ENCODE measurements at regions of chr3 and their contacts with region 1.

Region 1: DNA sequence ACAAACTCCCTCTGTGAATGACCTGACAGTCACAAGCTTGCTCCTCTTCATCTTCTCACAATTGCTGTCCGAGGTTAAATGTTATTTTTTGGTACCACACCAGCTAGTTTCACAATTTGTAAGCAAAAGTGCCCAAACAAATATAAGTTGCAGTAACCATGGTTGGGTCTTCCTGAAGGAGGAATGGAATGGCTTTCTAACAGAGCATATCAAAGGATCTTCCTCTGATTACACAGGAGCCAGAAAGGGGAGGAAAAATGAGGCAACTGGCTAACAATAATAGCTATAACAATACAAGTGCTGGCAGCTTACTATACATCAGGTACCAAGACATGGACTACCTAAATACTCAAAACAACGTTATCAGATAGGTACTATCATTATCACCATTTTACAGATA is 90.4 kb downstream of the WWTR1 start:
- DNase-seq: no peak
- ATAC-seq: no peak
- H3K4me3 ChIP-seq: no peak overlapping the region
- H3K4me3 Mint-ChIP-seq: no peak overlapping the region
- H3K27ac ChIP-seq: no peak overlapping the region
- H3K27ac Mint-ChIP-seq: no peak overlapping the region
- H3K4me1 ChIP-seq: no peaks in the 10 kb centered on the region
- H3K4me1 Mint-ChIP-seq: no peaks in the 10 kb centered on the region
- H3K27me3 ChIP-seq: no peaks in the 10 kb centered on the region
- H3K27me3 Mint-ChIP-seq: no peaks in the 10 kb centered on the region
- CTCF ChIP-seq: no peak

Region 2: GRCh38 chr3:149554826-149555225 is 12.6 kb before region 1 on chr3:
- CTCF ChIA-PET with region 1: interaction called, 12 read pairs
- POLR2A ChIA-PET with region 1: no interaction called
- intact Hi-C with region 1: no loop called
- DNase-seq: no peak
- ATAC-seq: no peak
- H3K4me3 ChIP-seq: no peak overlapping the region
- H3K4me3 Mint-ChIP-seq: no peak overlapping the region
- H3K27ac ChIP-seq: no peak overlapping the region
- H3K27ac Mint-ChIP-seq: no peak overlapping the region
- H3K4me1 ChIP-seq: no peaks in the 10 kb centered on the region
- H3K4me1 Mint-ChIP-seq: no peaks in the 10 kb centered on the region
- H3K27me3 ChIP-seq: no peaks in the 10 kb centered on the region
- H3K27me3 Mint-ChIP-seq: peaks cover 5% of the 10 kb centered on the region
- CTCF ChIP-seq: no peak

Region 3: GRCh38 chr3:149717391-149718056 is 150.1 kb after region 1 on chr3:
- CTCF ChIA-PET with region 1: interaction called, 15 read pairs
- POLR2A ChIA-PET with region 1: no interaction called
- intact Hi-C with region 1: loop called (anchors 1 kb)
- DNase-seq: peak; percentile 36
- ATAC-seq: no peak
- H3K4me3 ChIP-seq: peak overlapping the region in 2 of 5 experiments; percentile 31 to 37
- H3K4me3 Mint-ChIP-seq: peak overlapping the region; percentile 47
- H3K27ac ChIP-seq: no peak overlapping the region
- H3K27ac Mint-ChIP-seq: no peak overlapping the region
- H3K4me1 ChIP-seq: no peaks in the 10 kb centered on the region
- H3K4me1 Mint-ChIP-seq: no peaks in the 10 kb centered on the region
- H3K27me3 ChIP-seq: no peaks in the 10 kb centered on the region
- H3K27me3 Mint-ChIP-seq: peaks cover under 1% of the 10 kb centered on the region
- CTCF ChIP-seq: peak; percentile 75

Measured in B cell (primary cell).